Colonic mucosa (tissue), 4 donors: ENCODE measurements at regions of chr18 and their contacts with region 1.

Region 1: DNA sequence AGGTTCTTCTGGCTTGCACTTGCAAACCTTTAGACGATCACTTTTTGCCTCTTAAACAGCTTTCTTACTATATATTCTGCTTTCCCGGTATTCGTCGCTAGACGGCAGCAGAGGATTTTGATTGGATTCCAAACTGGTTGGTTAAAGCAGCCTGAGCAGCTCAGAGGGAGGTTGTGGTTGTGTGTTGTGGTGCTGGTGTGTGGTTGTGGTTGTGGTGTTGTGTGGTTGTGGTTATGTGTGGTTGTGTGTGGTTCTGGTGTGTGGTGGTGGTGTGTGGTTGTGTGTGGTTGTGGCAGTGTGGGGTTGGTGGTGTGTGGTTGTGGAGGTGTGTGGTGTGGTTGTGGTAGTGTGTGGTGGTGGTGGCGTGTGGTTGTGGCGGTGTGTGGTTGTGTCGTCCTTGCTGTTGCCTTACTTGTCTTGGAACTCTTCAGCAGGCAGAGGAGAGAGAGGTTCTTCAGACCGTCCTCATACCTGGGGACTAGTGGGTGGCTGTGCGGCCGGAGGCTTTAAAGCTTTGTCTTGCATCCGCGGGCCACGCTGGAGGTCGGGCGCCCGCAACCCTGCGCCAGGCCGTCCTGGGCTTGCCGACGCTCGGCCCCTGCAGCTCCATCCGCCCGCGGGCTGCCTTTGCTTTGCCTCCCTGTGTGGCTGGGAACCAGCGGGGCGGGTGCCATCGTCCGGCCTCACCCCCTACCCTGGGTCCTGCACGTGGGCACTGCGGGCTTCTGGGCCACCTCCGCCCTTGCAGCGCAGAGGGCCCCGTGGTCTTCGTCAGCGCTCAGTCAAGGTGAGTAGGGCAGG is 190.8 kb downstream of the ARHGAP28 start:
- DNase-seq: peak; percentile 80
- H3K4me3 ChIP-seq: no peak overlapping the region
- H3K27ac ChIP-seq: no peak overlapping the region
- H3K4me1 ChIP-seq: no peaks in the 10 kb centered on the region
- H3K27me3 ChIP-seq: no peaks in the 10 kb centered on the region
- CTCF ChIP-seq: peak; percentile 42

Region 2: GRCh38 chr18:7000484-7001096 is 80.3 kb after region 1 on chr18:
- intact Hi-C with region 1: loop called (anchors 5 kb)
- DNase-seq: peak; percentile 29
- H3K4me3 ChIP-seq: no peak overlapping the region
- H3K27ac ChIP-seq: no peak overlapping the region
- H3K4me1 ChIP-seq: no peaks in the 10 kb centered on the region
- H3K27me3 ChIP-seq: no peaks in the 10 kb centered on the region
- CTCF ChIP-seq: peak; percentile 47

Region 3: GRCh38 chr18:7021994-7022840 is 101.9 kb after region 1 on chr18:
- intact Hi-C with region 1: loop called (anchors 2 kb)
- DNase-seq: peak; percentile 75
- H3K4me3 ChIP-seq: no peak overlapping the region
- H3K27ac ChIP-seq: no peak overlapping the region
- H3K4me1 ChIP-seq: no peaks in the 10 kb centered on the region
- H3K27me3 ChIP-seq: no peaks in the 10 kb centered on the region
- CTCF ChIP-seq: peak; percentile 77

Region 4: DNA sequence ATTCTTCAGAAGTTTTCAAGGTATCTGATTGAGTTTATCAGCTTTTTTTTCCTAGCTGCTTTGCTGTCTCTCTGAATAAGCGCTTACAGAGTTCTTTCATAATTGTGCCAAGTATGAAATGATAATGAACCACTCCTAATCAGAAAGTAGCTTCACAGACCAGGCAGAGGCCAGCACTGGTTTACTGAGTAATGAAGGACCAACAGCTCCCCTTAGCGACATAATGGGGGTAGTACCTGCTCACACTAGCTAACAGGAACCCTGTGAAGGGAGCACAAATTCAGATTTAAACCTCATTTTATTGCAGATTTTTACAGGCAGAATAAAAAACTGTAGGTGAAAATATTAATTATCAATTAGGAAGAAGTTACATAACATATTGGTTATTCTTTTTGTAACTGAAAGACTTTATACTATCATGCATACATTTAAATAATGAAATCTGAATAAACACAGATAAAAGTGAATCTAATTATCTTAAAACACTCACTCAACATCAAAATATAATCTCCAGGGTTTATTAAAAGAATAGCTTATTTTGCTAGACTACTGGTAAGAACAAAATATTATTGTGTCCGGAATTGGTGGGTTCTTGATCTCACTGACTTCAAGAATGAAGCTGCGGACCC is 256.9 kb after region 1 on chr18:
- intact Hi-C with region 1: loop called (anchors 5 kb)
- DNase-seq: no peak
- H3K4me3 ChIP-seq: no peak overlapping the region
- H3K27ac ChIP-seq: no peak overlapping the region
- H3K4me1 ChIP-seq: no peaks in the 10 kb centered on the region
- H3K27me3 ChIP-seq: no peaks in the 10 kb centered on the region
- CTCF ChIP-seq: peak; percentile 52